ENCODE measurements at regions of chr17 and their contacts with region 1.

Region 1: GRCh38 chr17:76467366-76467765 is at the start of gene AANAT:
- DNase-seq: no peak
- ATAC-seq: no peak
- H3K4me3 ChIP-seq: no peak within 1 kb of the TSS
- H3K4me3 Mint-ChIP-seq: no peak within 1 kb of the TSS
- H3K27ac ChIP-seq: no peak within 1 kb of the TSS
- H3K27ac Mint-ChIP-seq: no peak within 1 kb of the TSS
- H3K4me1 ChIP-seq: peaks cover 3% of the 10 kb centered on the region
- H3K4me1 Mint-ChIP-seq: peaks cover 4% of the 10 kb centered on the region
- H3K27me3 ChIP-seq: no peaks in the 10 kb centered on the region
- H3K27me3 Mint-ChIP-seq: no peaks in the 10 kb centered on the region
- CTCF ChIP-seq: no peak
- total RNA-seq, gene AANAT: not detected

Region 2: DNA sequence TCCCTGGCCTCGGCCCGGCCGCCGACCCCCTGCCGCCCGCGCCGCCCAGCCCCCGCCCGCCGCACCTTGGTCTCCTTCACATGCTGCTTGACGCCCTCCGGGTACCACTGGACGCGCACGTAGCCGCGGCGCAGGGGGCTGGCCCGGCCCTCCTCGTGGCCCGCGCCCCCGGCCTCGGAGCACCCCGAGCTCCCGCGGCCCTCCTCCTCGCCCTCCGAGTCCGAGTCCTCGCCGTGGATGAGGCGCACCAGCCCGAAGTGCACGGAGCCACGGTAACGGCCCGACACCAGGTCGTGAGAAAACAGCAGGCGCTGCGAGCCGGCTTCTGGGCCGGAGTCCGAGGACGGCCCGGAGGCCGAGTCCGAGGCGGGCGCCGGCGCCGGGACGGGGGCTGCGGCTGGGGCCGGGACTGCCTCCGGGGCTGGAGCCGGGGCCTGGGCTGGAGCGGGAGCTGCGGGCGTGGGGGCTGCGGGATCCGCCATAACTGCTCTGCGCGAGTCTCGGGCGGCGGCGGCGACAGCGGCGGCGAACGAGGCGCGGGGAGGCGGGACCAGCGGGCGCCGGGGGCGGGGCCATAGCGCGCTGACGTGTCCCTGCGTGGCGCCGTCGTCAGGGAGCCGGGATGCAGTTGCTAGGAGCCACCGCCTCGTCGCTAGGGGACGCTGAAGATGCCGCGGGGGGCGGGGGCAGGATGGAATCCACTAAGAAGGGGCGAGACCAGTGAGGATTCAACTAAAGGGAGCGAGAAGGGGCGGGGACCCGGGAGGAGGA is 14.5 kb before region 1 on chr17 and contains the start of gene UBE2O:
- CTCF ChIA-PET with region 1: interaction called, 15 read pairs
- POLR2A ChIA-PET with region 1: interaction called, 4 read pairs
- intact Hi-C with region 1: no loop called
- DNase-seq: peak; percentile 84 to 96 (median 94)
- ATAC-seq: peak; percentile 92
- H3K4me3 ChIP-seq: peak within 1 kb of the TSS; percentile 49 to 78
- H3K4me3 Mint-ChIP-seq: peak within 1 kb of the TSS; percentile 85
- H3K27ac ChIP-seq: peak within 1 kb of the TSS; percentile 50 to 64
- H3K27ac Mint-ChIP-seq: peak within 1 kb of the TSS; percentile 78
- H3K4me1 ChIP-seq: peaks cover 22% of the 10 kb centered on the region
- H3K4me1 Mint-ChIP-seq: peaks cover 39% of the 10 kb centered on the region
- H3K27me3 ChIP-seq: no peaks in the 10 kb centered on the region
- H3K27me3 Mint-ChIP-seq: no peaks in the 10 kb centered on the region
- CTCF ChIP-seq: peak; percentile 39
- total RNA-seq, gene UBE2O: 29.8 to 32.7 TPM

Region 3: DNA sequence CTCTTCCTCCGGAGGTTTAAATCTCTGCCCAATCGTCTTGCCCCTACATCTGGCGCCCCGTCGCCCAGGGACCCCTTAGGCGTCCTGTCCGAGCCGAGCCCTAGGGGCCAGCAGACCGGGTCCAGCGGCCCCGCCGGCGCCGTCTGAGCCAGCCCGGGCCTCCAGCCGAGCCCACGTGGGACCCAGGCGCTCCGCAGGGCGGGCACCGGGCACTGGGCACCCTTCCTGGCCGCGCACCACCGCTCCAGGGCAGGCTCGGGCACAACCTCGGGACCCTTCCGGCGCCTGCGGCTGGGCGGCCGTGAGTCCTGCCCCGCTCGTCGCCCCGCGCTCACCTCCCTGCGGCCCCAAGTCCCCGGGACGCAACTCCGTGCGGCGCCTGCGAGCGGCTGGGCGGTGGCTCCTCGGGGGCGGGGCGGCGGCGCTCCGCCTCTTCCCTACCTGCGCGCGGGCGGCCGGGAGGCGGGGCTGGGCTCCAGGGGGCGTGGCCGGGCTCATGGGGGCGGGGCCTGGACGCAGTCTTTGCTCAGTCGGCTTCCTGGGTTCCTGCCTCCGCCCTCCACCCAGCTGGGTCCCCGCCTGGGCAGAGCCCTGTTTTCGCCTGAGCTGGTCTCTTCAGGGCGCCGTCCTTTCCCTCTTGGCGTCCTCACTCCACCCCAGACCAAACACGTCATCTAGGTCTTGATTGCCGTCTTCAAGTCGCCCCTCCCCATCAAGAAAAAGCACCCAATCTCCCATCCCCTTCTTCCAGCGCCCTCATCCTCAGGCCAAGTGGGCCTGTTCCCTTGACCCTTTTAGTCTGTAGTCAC is 33.9 kb after region 1 on chr17 and contains the start of gene RHBDF2:
- CTCF ChIA-PET with region 1: interaction called, 265 read pairs
- POLR2A ChIA-PET with region 1: interaction called, 6 read pairs
- intact Hi-C with region 1: loop called (anchors 1 kb)
- DNase-seq: peak; percentile 91 to 99 (median 96)
- ATAC-seq: peak; percentile 97
- H3K4me3 ChIP-seq: peak within 1 kb of the TSS; percentile 79 to 93
- H3K4me3 Mint-ChIP-seq: peak within 1 kb of the TSS; percentile 83
- H3K27ac ChIP-seq: peak within 1 kb of the TSS; percentile 73 to 85
- H3K27ac Mint-ChIP-seq: peak within 1 kb of the TSS; percentile 96
- H3K4me1 ChIP-seq: peaks cover 44% of the 10 kb centered on the region
- H3K4me1 Mint-ChIP-seq: peaks cover 47% of the 10 kb centered on the region
- H3K27me3 ChIP-seq: no peaks in the 10 kb centered on the region
- H3K27me3 Mint-ChIP-seq: no peaks in the 10 kb centered on the region
- CTCF ChIP-seq: no peak
- total RNA-seq, gene RHBDF2: 45.4 to 46.2 TPM

Region 4: GRCh38 chr17:76534831-76535732 is 67.7 kb after region 1 on chr17:
- CTCF ChIA-PET with region 1: no interaction called
- POLR2A ChIA-PET with region 1: no interaction called
- intact Hi-C with region 1: no loop called
- DNase-seq: no peak
- ATAC-seq: no peak
- H3K4me3 ChIP-seq: no peak overlapping the region
- H3K4me3 Mint-ChIP-seq: no peak overlapping the region
- H3K27ac ChIP-seq: no peak overlapping the region
- H3K27ac Mint-ChIP-seq: no peak overlapping the region
- H3K4me1 ChIP-seq: peaks cover 25% of the 10 kb centered on the region
- H3K4me1 Mint-ChIP-seq: peaks cover 16% of the 10 kb centered on the region
- H3K27me3 ChIP-seq: peaks cover 3 to 13% of the 10 kb centered on the region in 2 experiments
- H3K27me3 Mint-ChIP-seq: peaks cover 15% of the 10 kb centered on the region
- CTCF ChIP-seq: no peak

Region 5: GRCh38 chr17:76547184-76547641 is 79.8 kb after region 1 on chr17:
- CTCF ChIA-PET with region 1: interaction called, 17 read pairs
- POLR2A ChIA-PET with region 1: no interaction called
- intact Hi-C with region 1: loop called in 1 of 2 experiments (anchors 1 kb)
- DNase-seq: peak; percentile 30 to 83 (median 72)
- ATAC-seq: peak; percentile 94
- H3K4me3 ChIP-seq: no peak overlapping the region
- H3K4me3 Mint-ChIP-seq: no peak overlapping the region
- H3K27ac ChIP-seq: no peak overlapping the region
- H3K27ac Mint-ChIP-seq: no peak overlapping the region
- H3K4me1 ChIP-seq: peaks cover 7% of the 10 kb centered on the region
- H3K4me1 Mint-ChIP-seq: peaks cover 11% of the 10 kb centered on the region
- H3K27me3 ChIP-seq: no peaks in the 10 kb centered on the region
- H3K27me3 Mint-ChIP-seq: peaks cover 8% of the 10 kb centered on the region
- CTCF ChIP-seq: peak; percentile 62

Measured in CD8-positive, alpha-beta T cell (primary cell).